Lower lobe of right lung (tissue), 2 donors: ENCODE measurements at regions of chr9 and their contacts with region 1.

Region 1: DNA sequence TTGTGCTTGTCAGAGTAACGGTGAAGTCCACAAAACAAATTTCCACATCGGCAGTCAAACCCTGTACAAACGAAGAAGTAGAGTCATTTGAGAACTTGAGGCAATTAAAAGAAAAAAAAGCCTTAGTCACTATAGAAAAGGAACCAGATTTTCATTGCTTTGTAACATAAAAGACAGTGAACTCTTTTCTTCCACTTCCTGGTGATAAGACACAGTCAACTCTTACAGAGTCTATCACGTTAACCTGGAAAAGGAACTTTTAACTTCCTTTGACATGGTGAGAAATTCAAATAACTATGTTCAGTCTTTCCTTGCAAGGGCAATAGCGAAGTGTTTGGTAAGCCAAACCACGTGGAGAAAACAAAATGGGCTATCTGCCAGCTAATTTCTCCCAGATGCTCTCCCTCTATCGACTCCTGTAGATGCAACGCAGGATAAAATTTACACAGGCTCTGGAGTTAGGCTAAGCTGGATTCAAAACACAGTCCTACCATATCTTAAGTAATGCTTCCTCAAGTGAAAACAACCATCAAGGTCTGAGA is 8.9 kb downstream of the ZFAND5 start:
- DNase-seq: no peak
- ATAC-seq: peak in 1 of 2 donors; percentile 29
- H3K4me3 ChIP-seq: no peak overlapping the region
- H3K27ac ChIP-seq: peak overlapping the region; percentile 14
- H3K4me1 ChIP-seq: peaks cover 65% of the 10 kb centered on the region
- H3K27me3 ChIP-seq: no peaks in the 10 kb centered on the region
- CTCF ChIP-seq: no peak

Region 2: DNA sequence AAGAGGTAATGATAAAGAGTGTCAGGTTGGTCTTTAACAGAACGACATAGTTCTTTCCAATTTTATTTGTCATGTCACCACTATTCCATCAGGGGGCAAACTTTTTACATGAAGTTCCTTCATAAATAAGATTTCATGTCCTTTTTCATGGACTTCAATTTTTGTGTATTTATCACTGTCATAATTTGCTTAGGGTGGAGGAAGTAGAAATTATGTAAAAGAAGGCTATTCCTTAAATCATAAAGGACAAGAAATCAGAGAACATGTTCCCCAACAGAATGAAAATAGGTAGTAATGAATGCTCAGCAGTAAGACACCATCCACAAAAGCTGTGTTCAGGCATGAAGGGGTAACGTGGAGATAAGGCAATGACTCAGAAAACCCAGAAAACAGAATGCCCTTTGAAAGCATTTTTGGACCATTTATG is 63.8 kb before region 1 on chr9:
- intact Hi-C with region 1: loop called (anchors 10 kb)
- DNase-seq: no peak
- ATAC-seq: peak; percentile 14 to 52
- H3K4me3 ChIP-seq: no peak overlapping the region
- H3K27ac ChIP-seq: peak overlapping the region; percentile 60
- H3K4me1 ChIP-seq: peaks cover 20% of the 10 kb centered on the region
- H3K27me3 ChIP-seq: no peaks in the 10 kb centered on the region
- CTCF ChIP-seq: peak; percentile 59

Region 3: DNA sequence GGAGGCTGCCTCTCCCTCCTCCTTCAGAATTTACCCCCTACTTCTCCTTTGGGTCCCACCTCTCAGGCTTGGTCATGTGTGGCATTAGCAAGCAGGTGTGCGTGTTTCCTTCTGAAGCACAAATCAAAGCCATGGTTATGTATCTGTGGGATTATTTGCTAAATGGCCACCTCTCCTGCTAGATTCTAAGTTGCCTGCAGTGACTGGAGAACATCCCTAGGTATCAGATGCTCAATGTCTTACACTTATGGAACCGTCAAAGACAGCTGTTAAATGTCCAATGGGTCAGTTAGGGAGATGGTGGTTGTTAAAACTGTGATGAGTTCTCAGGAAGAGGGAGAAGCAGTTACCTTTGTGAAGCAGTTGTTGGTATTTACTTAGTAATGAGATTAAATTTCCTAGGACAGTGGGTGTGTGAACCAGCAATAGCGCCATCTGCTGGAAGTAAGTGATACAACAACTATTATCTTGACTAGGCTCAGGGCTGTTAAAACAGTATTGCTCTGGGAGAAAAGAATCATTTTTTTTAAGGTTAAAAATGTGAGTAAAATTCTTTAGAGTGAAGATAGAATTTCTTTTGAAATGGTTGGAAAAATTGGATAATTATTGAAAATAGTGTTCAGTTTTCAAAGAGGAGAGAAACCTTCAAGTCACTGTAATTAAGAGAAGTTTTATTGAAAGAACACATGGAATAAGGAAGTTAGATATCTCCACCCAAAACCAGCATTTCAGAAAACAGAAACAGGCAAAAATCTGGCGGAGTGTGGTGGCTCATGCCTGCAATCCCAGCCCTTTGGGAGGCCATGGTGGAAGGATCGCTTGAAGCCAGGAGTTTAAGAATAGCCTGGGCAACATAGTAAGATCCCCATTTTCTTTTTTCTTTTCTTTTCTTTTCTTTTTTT is 236.6 kb after region 1 on chr9:
- intact Hi-C with region 1: loop called (anchors 10 kb)
- DNase-seq: no peak
- ATAC-seq: peak; percentile 84 to 85
- H3K4me3 ChIP-seq: no peak overlapping the region
- H3K27ac ChIP-seq: peak overlapping the region; percentile 26
- H3K4me1 ChIP-seq: peaks cover 26% of the 10 kb centered on the region
- H3K27me3 ChIP-seq: no peaks in the 10 kb centered on the region
- CTCF ChIP-seq: peak; percentile 83